MCF 10A (cell line): ENCODE measurements at regions of chr18 and their contacts with region 1.

Region 1: DNA sequence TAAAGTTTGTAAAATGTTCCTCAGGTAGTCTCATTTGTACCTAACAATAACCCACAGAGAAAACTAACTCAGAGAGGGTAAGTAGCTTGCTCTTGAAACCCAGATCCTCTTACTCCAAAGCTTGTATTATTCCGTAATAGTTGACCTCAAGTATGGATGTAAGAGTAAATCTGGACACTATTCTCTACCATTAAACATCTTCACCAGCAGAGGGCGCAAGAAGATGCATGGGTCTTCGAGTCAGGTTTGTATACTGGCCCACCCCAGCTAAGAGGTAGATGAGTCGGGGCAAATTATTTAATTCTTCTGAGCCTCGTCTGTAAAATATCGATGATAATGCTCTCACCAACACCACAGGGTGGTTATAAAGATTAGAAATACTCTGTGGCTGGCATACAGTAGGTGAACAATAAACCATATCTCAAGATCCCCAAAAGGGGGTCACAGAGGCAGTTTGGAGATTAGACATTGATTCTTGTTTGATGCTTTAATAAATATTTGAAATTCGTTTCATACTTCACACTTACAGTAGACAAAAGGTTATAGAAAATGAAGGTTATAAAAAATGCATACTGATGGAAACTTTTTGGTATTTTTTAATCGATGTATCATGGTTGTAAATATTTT is 3.5 kb upstream of the CABLES1 start:
- DNase-seq: peak; percentile 90
- H3K4me3 Mint-ChIP-seq: no peak overlapping the region
- H3K27ac Mint-ChIP-seq: no peak overlapping the region
- H3K4me1 Mint-ChIP-seq: peaks cover 11% of the 10 kb centered on the region
- H3K27me3 Mint-ChIP-seq: no peaks in the 10 kb centered on the region
- CTCF ChIP-seq: peak; percentile 54

Region 2: DNA sequence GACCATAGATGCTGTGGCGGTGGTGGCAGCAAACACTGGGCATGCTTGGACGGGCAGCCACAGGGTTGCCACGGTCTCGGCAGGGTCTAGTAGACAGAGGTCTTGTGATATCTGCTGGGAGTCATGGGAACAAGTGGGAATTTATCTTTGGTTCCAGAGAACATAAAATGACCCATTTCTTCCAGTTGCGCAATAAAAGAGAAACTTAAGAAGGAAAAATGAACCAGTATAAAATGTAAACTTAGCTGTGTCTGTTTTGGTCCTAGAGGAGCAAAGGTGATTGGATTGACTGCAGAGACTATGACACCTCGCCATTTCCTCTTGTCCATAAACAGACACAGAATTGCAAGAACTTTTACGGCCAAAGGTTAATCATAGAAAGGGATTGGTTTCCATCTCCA is 331.3 kb before region 1 on chr18:
- CTCF ChIA-PET with region 1: interaction called, 14 read pairs
- POLR2A ChIA-PET with region 1: interaction called, 3 read pairs
- intact Hi-C with region 1: no loop called
- DNase-seq: no peak
- H3K4me3 Mint-ChIP-seq: no peak overlapping the region
- H3K27ac Mint-ChIP-seq: no peak overlapping the region
- H3K4me1 Mint-ChIP-seq: peaks cover 8% of the 10 kb centered on the region
- H3K27me3 Mint-ChIP-seq: no peaks in the 10 kb centered on the region
- CTCF ChIP-seq: no peak

Region 3: GRCh38 chr18:23077493-23078256 is 54.1 kb before region 1 on chr18:
- CTCF ChIA-PET with region 1: no interaction called
- POLR2A ChIA-PET with region 1: interaction called, 3 read pairs
- intact Hi-C with region 1: loop called (anchors 5 kb)
- DNase-seq: peak; percentile 43
- H3K4me3 Mint-ChIP-seq: no peak overlapping the region
- H3K27ac Mint-ChIP-seq: no peak overlapping the region
- H3K4me1 Mint-ChIP-seq: no peaks in the 10 kb centered on the region
- H3K27me3 Mint-ChIP-seq: no peaks in the 10 kb centered on the region
- CTCF ChIP-seq: peak; percentile 34

Region 4: DNA sequence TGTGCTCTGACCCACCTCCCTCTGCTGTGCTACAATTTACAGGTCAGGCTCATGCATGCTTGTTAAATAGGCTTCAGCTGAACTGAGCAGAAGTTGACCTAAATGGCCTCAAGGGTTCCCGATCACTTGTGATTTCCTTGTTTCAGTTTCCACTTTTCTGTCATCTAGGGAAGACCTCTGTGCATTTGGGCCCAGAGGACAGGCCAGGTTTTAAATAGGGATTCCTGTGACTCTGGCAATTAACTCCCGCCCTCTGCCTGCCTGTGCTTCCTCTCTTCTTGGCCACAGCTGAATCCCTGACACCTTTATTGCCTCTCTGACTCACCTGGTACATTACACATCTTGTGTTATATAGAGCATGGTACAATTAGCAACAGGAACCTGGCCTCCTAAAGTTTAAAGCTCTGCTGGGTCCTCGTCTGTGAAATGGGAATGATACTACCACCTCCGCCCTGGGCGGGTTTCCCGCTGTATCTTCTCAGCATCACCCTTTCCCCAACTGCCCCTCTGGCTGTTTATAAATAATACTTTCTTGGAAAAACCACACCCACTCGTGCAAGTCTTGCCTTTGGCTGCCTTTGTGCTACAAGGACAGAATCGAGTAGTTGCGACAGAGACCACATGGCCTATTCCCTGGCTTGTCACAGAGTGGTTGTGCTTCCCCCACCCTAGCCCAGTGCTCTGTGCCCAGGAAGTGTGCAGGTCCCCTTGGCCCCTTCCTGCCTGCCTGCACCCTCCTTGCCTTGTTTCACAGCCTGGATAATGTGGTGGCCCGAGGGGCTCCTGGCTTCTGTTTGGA is 11.4 kb after region 1 on chr18:
- CTCF ChIA-PET with region 1: interaction called, 7 read pairs
- POLR2A ChIA-PET with region 1: interaction called, 13 read pairs
- intact Hi-C with region 1: no loop called
- DNase-seq: peak; percentile 77
- H3K4me3 Mint-ChIP-seq: no peak overlapping the region
- H3K27ac Mint-ChIP-seq: peak overlapping the region; percentile 89
- H3K4me1 Mint-ChIP-seq: peaks cover 21% of the 10 kb centered on the region
- H3K27me3 Mint-ChIP-seq: no peaks in the 10 kb centered on the region
- CTCF ChIP-seq: no peak

Region 5: DNA sequence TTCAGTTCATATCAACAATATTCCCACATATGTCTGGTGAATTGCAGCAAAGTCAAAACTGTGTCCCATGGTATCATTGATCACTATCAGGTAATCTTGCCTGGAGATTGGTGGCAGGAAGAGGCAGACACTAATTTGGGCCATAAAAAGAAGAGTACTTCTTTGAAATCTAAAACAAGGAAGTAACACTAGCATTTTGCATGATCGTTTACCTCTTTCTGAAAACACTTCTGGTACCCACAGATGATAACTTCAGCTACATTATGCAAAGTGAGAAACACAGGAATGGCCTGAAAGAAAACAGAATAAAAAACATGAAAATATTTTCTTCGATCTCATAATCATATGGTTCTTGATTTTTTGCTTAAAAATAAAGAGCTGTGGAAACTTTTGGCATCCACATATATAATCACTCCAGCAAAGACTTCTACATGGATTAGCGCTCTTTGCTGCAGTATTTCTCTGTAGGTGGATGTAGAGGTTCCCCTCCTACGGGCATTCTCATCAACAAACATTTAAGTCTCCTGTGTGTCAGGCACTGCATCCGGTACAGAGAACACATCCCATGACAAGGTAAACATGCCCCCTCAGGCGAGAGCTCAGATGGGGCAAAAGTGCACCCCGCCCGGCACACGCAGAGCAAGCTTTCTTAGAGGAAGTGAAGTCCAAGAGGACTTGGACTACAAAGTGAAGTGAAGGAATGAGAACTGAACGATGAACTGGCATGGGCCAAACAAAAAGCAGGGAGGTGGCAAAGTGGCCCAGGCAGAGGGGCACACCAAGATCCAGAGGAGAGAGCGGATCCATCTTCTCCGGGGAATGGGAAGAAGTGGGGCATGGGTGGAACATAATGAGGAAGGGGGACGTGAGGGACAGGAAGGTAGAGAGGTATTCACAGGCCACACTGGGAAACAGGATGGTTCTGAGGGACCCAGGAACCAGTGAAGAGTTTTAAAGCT is 253.3 kb after region 1 on chr18:
- CTCF ChIA-PET with region 1: interaction called, 67 read pairs
- POLR2A ChIA-PET with region 1: interaction called, 18 read pairs
- intact Hi-C with region 1: no loop called
- DNase-seq: no peak
- H3K4me3 Mint-ChIP-seq: no peak overlapping the region
- H3K27ac Mint-ChIP-seq: no peak overlapping the region
- H3K4me1 Mint-ChIP-seq: peaks cover 3% of the 10 kb centered on the region
- H3K27me3 Mint-ChIP-seq: no peaks in the 10 kb centered on the region
- CTCF ChIP-seq: no peak

Region 6: GRCh38 chr18:23586249-23587196 is 454.7 kb after region 1 on chr18 and contains the start of gene NPC1:
- CTCF ChIA-PET with region 1: no interaction called
- POLR2A ChIA-PET with region 1: no interaction called
- intact Hi-C with region 1: loop called (anchors 10 kb)
- DNase-seq: peak; percentile 93
- H3K4me3 Mint-ChIP-seq: peak within 1 kb of the TSS; percentile 84
- H3K27ac Mint-ChIP-seq: peak within 1 kb of the TSS; percentile 98
- H3K4me1 Mint-ChIP-seq: peaks cover 13% of the 10 kb centered on the region
- H3K27me3 Mint-ChIP-seq: no peaks in the 10 kb centered on the region
- CTCF ChIP-seq: peak; percentile 90
- total RNA-seq, gene NPC1: 60.4 and 78.8 TPM in 2 replicates